GM12878 (cell line): ENCODE measurements at regions of chr1 and their contacts with region 1.

Region 1: DNA sequence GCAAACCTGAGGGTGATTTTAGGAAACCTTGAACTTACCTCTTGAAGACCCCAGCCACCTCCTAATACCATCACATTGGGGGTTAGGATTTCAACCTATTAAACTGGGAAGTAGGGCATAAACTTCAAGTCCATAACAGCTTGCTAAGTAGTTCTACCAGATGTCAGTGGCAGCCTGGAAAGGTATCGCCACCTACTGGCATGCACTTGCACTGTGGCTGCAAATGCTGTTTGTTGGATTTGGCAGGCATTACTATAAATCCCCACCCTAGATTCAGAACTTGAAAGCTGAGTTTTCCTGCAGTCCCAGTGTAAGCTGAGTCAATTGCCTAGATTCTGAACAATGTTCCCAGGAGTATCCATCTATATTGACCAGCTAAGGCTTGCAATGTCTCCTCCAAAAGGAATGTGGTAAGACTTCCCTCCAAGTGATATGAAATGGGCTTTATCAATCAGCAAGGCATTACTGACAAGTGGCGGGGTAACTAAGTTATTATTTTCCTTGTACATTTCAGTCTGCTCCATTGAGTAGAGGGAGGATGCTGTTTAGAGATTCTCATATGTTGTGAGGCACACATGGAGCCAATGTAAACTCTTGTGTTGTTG is 474.5 kb downstream of the PTPRC start:
- DNase-seq: peak; percentile 43
- ATAC-seq: peak; percentile 92
- H3K4me3 ChIP-seq: no peak overlapping the region
- H3K27ac ChIP-seq: no peak overlapping the region
- H3K4me1 ChIP-seq: no peaks in the 10 kb centered on the region
- H3K27me3 ChIP-seq: no peaks in the 10 kb centered on the region
- CTCF ChIP-seq: peak; percentile 58 to 87 (median 77)
- EP300 ChIP-seq: no peak
- POLR2A ChIP-seq: no peak
- RAD21 ChIP-seq: peak; percentile 91

Region 2: DNA sequence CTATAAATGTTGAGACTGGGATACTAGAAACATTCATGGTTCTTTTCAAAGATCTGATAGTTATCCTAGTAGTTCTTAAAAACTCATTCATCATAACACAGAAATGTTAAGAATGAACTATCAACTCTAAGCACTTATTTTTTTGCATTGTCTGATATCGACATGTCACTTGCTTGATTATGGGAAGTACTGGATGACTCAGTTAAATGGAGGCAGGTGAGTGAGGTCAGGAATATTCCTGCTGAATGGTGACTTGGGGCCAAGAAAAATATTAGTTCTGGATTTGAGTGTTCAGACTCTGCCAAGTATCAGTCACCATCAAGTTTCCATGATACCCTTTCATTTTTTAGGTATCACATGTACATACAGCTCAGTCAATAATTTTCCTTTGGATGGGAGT is 892.9 kb before region 1 on chr1:
- CTCF ChIA-PET with region 1: no interaction called
- POLR2A ChIA-PET with region 1: no interaction called
- RAD21 ChIA-PET with region 1: no interaction called
- SMC1A ChIA-PET with region 1: no interaction called
- in situ Hi-C with region 1: no loop called
- intact Hi-C with region 1: no loop called
- DNase-seq: no peak
- ATAC-seq: no peak
- H3K4me3 ChIP-seq: no peak overlapping the region
- H3K27ac ChIP-seq: no peak overlapping the region
- H3K4me1 ChIP-seq: no peaks in the 10 kb centered on the region
- H3K27me3 ChIP-seq: no peaks in the 10 kb centered on the region
- CTCF ChIP-seq: no peak
- EP300 ChIP-seq: no peak
- POLR2A ChIP-seq: no peak
- RAD21 ChIP-seq: no peak

Region 3: DNA sequence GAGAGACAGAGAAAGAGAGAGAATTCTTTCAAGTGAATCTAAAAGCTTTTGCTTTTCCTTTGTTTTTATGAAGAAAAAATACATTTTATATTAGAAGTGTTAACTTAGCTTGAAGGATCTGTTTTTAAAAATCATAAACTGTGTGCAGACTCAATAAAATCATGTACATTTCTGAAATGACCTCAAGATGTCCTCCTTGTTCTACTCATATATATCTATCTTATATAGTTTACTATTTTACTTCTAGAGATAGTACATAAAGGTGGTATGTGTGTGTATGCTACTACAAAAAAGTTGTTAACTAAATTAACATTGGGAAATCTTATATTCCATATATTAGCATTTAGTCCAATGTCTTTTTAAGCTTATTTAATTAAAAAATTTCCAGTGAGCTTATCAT is 356.9 kb before region 1 on chr1:
- CTCF ChIA-PET with region 1: interaction called, 20 read pairs
- POLR2A ChIA-PET with region 1: no interaction called
- RAD21 ChIA-PET with region 1: interaction called, 4 read pairs
- SMC1A ChIA-PET with region 1: interaction called, 3 read pairs
- in situ Hi-C with region 1: no loop called
- intact Hi-C with region 1: no loop called
- DNase-seq: no peak
- ATAC-seq: peak; percentile 58; the same call in 2 of the 3 replicates
- H3K4me3 ChIP-seq: no peak overlapping the region
- H3K27ac ChIP-seq: no peak overlapping the region
- H3K4me1 ChIP-seq: no peaks in the 10 kb centered on the region
- H3K27me3 ChIP-seq: no peaks in the 10 kb centered on the region
- CTCF ChIP-seq: peak in 1 of 3 experiments; percentile 5; a peak in 1 of 6 replicates
- EP300 ChIP-seq: no peak
- POLR2A ChIP-seq: no peak
- RAD21 ChIP-seq: no peak

Region 4: DNA sequence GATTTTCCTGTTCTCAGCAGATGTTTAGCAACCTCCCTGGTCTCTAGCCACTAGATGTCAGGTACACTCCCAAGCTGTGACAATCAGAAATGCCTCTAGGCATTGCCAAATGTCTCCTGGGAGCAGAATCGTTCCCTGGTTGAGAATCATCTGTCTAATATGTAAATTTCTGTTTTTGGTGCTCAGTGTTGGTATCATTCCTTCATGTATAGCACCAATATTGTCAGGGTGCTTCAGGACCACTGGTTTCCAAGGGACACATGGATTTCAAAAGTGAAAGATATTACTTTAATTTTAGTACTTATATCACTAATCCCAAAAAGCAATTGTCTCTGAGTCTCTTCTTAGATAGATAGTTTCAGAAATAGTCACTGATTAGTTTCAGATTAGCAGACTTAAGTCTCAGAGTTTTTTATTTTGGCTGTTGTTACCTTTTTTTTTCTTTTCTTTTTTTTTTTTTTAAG is 314.4 kb before region 1 on chr1:
- CTCF ChIA-PET with region 1: interaction called, 5 read pairs
- POLR2A ChIA-PET with region 1: interaction called, 3 read pairs
- RAD21 ChIA-PET with region 1: interaction called, 5 read pairs
- SMC1A ChIA-PET with region 1: interaction called, 10 read pairs
- in situ Hi-C with region 1: no loop called
- intact Hi-C with region 1: no loop called
- DNase-seq: peak; percentile 57
- ATAC-seq: peak; percentile 86
- H3K4me3 ChIP-seq: no peak overlapping the region
- H3K27ac ChIP-seq: no peak overlapping the region
- H3K4me1 ChIP-seq: no peaks in the 10 kb centered on the region
- H3K27me3 ChIP-seq: no peaks in the 10 kb centered on the region
- CTCF ChIP-seq: peak in 1 of 3 experiments; percentile 28; a peak in 1 of 6 replicates
- EP300 ChIP-seq: peak; percentile 18 to 25; a peak in 1 of 4 replicates
- POLR2A ChIP-seq: no peak
- RAD21 ChIP-seq: peak; percentile 27; the same call in 1 of the 2 replicates

Region 5: GRCh38 chr1:199009447-199009846 is 103.9 kb before region 1 on chr1:
- CTCF ChIA-PET with region 1: no interaction called
- POLR2A ChIA-PET with region 1: no interaction called
- RAD21 ChIA-PET with region 1: interaction called, 4 read pairs
- SMC1A ChIA-PET with region 1: interaction called, 10 read pairs
- in situ Hi-C with region 1: no loop called
- intact Hi-C with region 1: no loop called
- DNase-seq: peak; percentile 48
- ATAC-seq: peak; percentile 83
- H3K4me3 ChIP-seq: peak overlapping the region; percentile 13; the same call in 1 of the 2 replicates
- H3K27ac ChIP-seq: peak overlapping the region; percentile 8; the same call in 1 of the 2 replicates
- H3K4me1 ChIP-seq: peaks cover 11% of the 10 kb centered on the region
- H3K27me3 ChIP-seq: no peaks in the 10 kb centered on the region
- CTCF ChIP-seq: no peak
- EP300 ChIP-seq: peak; percentile 34 to 41; a peak in 1 of 4 replicates
- POLR2A ChIP-seq: no peak
- RAD21 ChIP-seq: peak; percentile 26; the same call in 1 of the 2 replicates

Region 6: DNA sequence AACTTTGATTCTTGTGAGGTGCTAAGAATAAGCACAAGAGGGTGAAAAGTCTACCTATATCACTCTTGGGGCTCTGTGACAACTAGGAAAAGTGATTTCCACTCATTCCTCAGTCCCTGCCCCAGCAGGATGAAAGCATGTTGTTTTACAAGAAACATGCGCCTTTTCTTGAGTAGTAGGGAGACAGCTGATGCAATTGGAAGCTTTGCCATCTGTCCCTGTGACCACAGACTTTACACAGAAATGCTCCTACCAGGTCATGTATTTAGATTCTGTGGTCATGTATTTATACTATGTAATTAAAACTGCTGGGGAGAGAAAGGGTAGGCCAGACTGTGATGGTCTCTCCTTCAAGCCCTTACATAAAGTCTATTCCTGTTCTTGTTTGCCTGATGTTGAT is 29.1 kb before region 1 on chr1:
- CTCF ChIA-PET with region 1: interaction called, 13 read pairs
- POLR2A ChIA-PET with region 1: no interaction called
- RAD21 ChIA-PET with region 1: interaction called, 6 read pairs
- SMC1A ChIA-PET with region 1: interaction called, 24 read pairs
- in situ Hi-C with region 1: no loop called
- intact Hi-C with region 1: no loop called
- DNase-seq: no peak
- ATAC-seq: no peak
- H3K4me3 ChIP-seq: no peak overlapping the region
- H3K27ac ChIP-seq: no peak overlapping the region
- H3K4me1 ChIP-seq: peaks cover 13% of the 10 kb centered on the region
- H3K27me3 ChIP-seq: no peaks in the 10 kb centered on the region
- CTCF ChIP-seq: no peak
- EP300 ChIP-seq: no peak
- POLR2A ChIP-seq: no peak
- RAD21 ChIP-seq: no peak

Region 7: GRCh38 chr1:199173356-199173755 is 60.0 kb after region 1 on chr1:
- CTCF ChIA-PET with region 1: interaction called, 4 read pairs
- POLR2A ChIA-PET with region 1: no interaction called
- RAD21 ChIA-PET with region 1: interaction called, 6 read pairs
- SMC1A ChIA-PET with region 1: interaction called, 11 read pairs
- in situ Hi-C with region 1: no loop called
- intact Hi-C with region 1: no loop called
- DNase-seq: peak; percentile 92
- ATAC-seq: peak; percentile 89
- H3K4me3 ChIP-seq: no peak overlapping the region
- H3K27ac ChIP-seq: peak overlapping the region; percentile 85
- H3K4me1 ChIP-seq: peaks cover 27% of the 10 kb centered on the region
- H3K27me3 ChIP-seq: no peaks in the 10 kb centered on the region
- CTCF ChIP-seq: no peak
- EP300 ChIP-seq: peak; percentile 94 to 95
- POLR2A ChIP-seq: no peak
- RAD21 ChIP-seq: peak; percentile 20; the same call in 1 of the 2 replicates